A673 (cell line): ENCODE measurements at regions of chr13 and their contacts with region 1.

Region 1: GRCh38 chr13:20495082-20496023 is 30.3 kb downstream of the CRYL1 start:
- DNase-seq: peak; percentile 75
- H3K4me3 ChIP-seq: no peak overlapping the region
- H3K27ac ChIP-seq: no peak overlapping the region
- H3K4me1 ChIP-seq: peaks cover 8% of the 10 kb centered on the region
- H3K27me3 ChIP-seq: no peaks in the 10 kb centered on the region
- CTCF ChIP-seq: peak; percentile 96

Region 2: GRCh38 chr13:20616059-20616797 is 120.9 kb after region 1 on chr13:
- CTCF ChIA-PET with region 1: no interaction called
- POLR2A ChIA-PET with region 1: no interaction called
- intact Hi-C with region 1: no loop called
- DNase-seq: no peak
- H3K4me3 ChIP-seq: no peak overlapping the region
- H3K27ac ChIP-seq: no peak overlapping the region
- H3K4me1 ChIP-seq: no peaks in the 10 kb centered on the region
- H3K27me3 ChIP-seq: no peaks in the 10 kb centered on the region
- CTCF ChIP-seq: no peak

Region 3: GRCh38 chr13:20828539-20829364 is 333.4 kb after region 1 on chr13:
- CTCF ChIA-PET with region 1: interaction called, 5 read pairs
- POLR2A ChIA-PET with region 1: no interaction called
- intact Hi-C with region 1: loop called (anchors 2 kb)
- DNase-seq: peak; percentile 85
- H3K4me3 ChIP-seq: peak overlapping the region; percentile 27
- H3K27ac ChIP-seq: no peak overlapping the region
- H3K4me1 ChIP-seq: peaks cover 10% of the 10 kb centered on the region
- H3K27me3 ChIP-seq: no peaks in the 10 kb centered on the region
- CTCF ChIP-seq: peak; percentile 89

Region 4: GRCh38 chr13:20924758-20925394 is 429.5 kb after region 1 on chr13:
- CTCF ChIA-PET with region 1: interaction called, 14 read pairs
- POLR2A ChIA-PET with region 1: interaction called, 9 read pairs
- intact Hi-C with region 1: loop called (anchors 1 kb)
- DNase-seq: peak; percentile 88
- H3K4me3 ChIP-seq: no peak overlapping the region
- H3K27ac ChIP-seq: no peak overlapping the region
- H3K4me1 ChIP-seq: no peaks in the 10 kb centered on the region
- H3K27me3 ChIP-seq: no peaks in the 10 kb centered on the region
- CTCF ChIP-seq: peak; percentile 85

Region 5: GRCh38 chr13:21176220-21176982 is 681.0 kb after region 1 on chr13 and contains the starts of genes MRPL57 and SKA3:
- CTCF ChIA-PET with region 1: no interaction called
- POLR2A ChIA-PET with region 1: no interaction called
- intact Hi-C with region 1: loop called (anchors 10 kb)
- DNase-seq: peak; percentile 98
- H3K4me3 ChIP-seq: peak within 1 kb of the TSS; percentile 70
- H3K27ac ChIP-seq: peak within 1 kb of the TSS; percentile 98
- H3K4me1 ChIP-seq: peaks cover 33% of the 10 kb centered on the region
- H3K27me3 ChIP-seq: no peaks in the 10 kb centered on the region
- CTCF ChIP-seq: no peak
- total RNA-seq, gene MRPL57: 53.1 and 53.3 TPM in 2 replicates
- total RNA-seq, gene SKA3: 93.3 and 109 TPM in 2 replicates